CD4-positive, alpha-beta memory T cell (primary cell): ENCODE measurements at regions of chr11 and their contacts with region 1.

Region 1: DNA sequence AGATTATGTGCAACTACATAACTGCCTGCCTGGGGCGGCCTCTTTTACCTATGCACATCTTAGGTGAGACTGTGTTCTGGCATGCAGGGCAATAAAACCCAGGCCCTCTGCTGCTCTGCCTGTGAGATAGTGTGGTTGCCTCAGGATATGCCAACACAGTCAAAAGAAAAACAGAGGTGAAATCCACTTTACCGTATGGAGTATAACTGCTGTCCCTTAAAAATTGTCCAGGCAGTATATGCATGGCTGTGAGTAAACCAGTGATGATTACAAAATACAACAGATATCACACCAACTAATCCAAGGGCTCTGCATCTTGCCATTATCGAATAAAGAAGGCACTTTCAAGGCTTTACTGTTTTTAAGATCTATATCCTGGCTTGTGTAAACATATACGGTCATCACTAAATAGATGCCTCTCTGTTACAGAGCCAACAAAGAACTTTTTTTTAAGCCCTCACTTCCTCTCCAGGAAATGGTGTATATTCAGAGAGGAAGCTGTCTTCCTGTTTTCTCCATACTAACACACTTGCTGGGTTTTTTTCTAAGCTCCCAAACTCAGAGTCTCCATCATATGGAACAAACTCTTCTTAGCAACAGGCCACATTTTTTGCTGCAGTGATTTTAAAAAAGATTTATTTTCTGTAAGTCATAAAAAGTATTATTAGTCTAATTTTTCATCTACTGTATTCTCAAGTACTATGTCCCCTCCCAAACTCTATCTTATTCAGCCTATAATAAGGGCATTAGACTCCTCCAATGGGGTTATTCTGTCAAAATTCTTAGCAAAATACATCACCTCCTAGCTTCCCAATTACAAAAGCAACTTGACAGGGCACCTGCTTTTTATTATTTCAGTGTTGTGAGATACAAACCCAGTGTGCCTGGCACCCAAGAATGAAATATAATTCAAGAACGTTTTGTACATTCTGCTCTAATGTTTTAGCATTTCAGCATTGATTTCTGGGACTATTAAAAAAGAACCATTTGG is 135.2 kb downstream of the MAML2 start:
- DNase-seq: peak in 4 of 5 donors; percentile 52 to 62 (median 56)
- H3K4me3 ChIP-seq: peak overlapping the region in 1 of 2 donors; percentile 16
- H3K4me3 Mint-ChIP-seq: peak overlapping the region; percentile 31 to 89 (median 70)
- H3K27ac ChIP-seq: peak overlapping the region; percentile 39
- H3K27ac Mint-ChIP-seq: peak overlapping the region; percentile 80 to 97 (median 90)
- H3K4me1 ChIP-seq: peaks cover 97% of the 10 kb centered on the region
- H3K4me1 Mint-ChIP-seq: peaks cover 62 to 92% (median 79%) of the 10 kb centered on the region in 4 donors
- H3K27me3 ChIP-seq: no peaks in the 10 kb centered on the region
- H3K27me3 Mint-ChIP-seq: no peaks in the 10 kb centered on the region

Region 2: GRCh38 chr11:96045622-96046456 is 161.9 kb before region 1 on chr11:
- CTCF ChIA-PET with region 1: no interaction called
- POLR2A ChIA-PET with region 1: no interaction called
- intact Hi-C with region 1: no loop called
- DNase-seq: no peak
- H3K4me3 ChIP-seq: no peak overlapping the region
- H3K4me3 Mint-ChIP-seq: no peak overlapping the region
- H3K27ac ChIP-seq: no peak overlapping the region
- H3K27ac Mint-ChIP-seq: peak overlapping the region in 1 of 7 donors; percentile 10
- H3K4me1 ChIP-seq: no peaks in the 10 kb centered on the region
- H3K4me1 Mint-ChIP-seq: peaks cover 17 to 42% (median 20%) of the 10 kb centered on the region in 4 donors
- H3K27me3 ChIP-seq: no peaks in the 10 kb centered on the region
- H3K27me3 Mint-ChIP-seq: no peaks in the 10 kb centered on the region

Region 3: GRCh38 chr11:96091476-96091875 is 116.3 kb before region 1 on chr11:
- CTCF ChIA-PET with region 1: interaction called, 3 read pairs
- POLR2A ChIA-PET with region 1: no interaction called
- intact Hi-C with region 1: loop called (anchors 5 kb)
- DNase-seq: peak; percentile 34 to 54 (median 43)
- H3K4me3 ChIP-seq: no peak overlapping the region
- H3K4me3 Mint-ChIP-seq: peak overlapping the region in 4 of 8 donors; percentile 24 to 75 (median 32)
- H3K27ac ChIP-seq: no peak overlapping the region
- H3K27ac Mint-ChIP-seq: peak overlapping the region in 3 of 7 donors; percentile 23 to 43 (median 40)
- H3K4me1 ChIP-seq: peaks cover 32% of the 10 kb centered on the region
- H3K4me1 Mint-ChIP-seq: peaks cover 32 to 79% (median 61%) of the 10 kb centered on the region in 4 donors
- H3K27me3 ChIP-seq: no peaks in the 10 kb centered on the region
- H3K27me3 Mint-ChIP-seq: no peaks in the 10 kb centered on the region

Region 4: GRCh38 chr11:96180341-96180740 is 27.4 kb before region 1 on chr11:
- CTCF ChIA-PET with region 1: no interaction called
- POLR2A ChIA-PET with region 1: no interaction called
- intact Hi-C with region 1: no loop called
- DNase-seq: no peak
- H3K4me3 ChIP-seq: no peak overlapping the region
- H3K4me3 Mint-ChIP-seq: no peak overlapping the region
- H3K27ac ChIP-seq: no peak overlapping the region
- H3K27ac Mint-ChIP-seq: peak overlapping the region in 4 of 7 donors; percentile 24 to 70 (median 67)
- H3K4me1 ChIP-seq: peaks cover 11% of the 10 kb centered on the region
- H3K4me1 Mint-ChIP-seq: peaks cover 21 to 56% (median 33%) of the 10 kb centered on the region in 4 donors
- H3K27me3 ChIP-seq: no peaks in the 10 kb centered on the region
- H3K27me3 Mint-ChIP-seq: no peaks in the 10 kb centered on the region

Region 5: DNA sequence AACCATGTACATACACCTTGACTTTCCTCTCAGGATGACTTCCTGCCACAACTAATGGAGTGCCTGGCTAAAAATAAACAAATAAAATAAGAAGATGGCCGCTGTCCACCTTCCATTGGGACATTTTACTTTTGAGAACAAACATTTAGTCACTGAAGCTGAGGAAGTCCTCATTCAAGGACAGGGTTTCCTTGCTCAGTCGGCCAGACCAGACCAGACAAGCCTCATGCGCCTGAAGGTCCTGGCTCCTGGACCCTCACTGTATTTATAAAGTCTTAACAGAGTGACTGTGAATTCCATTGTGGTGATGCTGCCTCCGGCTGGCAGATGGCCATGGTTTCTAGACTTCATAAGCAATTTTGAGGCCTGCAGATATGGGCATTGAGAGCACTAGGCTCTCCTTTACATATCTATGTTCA is 20.7 kb after region 1 on chr11:
- CTCF ChIA-PET with region 1: interaction called, 3 read pairs
- POLR2A ChIA-PET with region 1: interaction called, 7 read pairs
- intact Hi-C with region 1: loop called (anchors 1 kb)
- DNase-seq: no peak
- H3K4me3 ChIP-seq: no peak overlapping the region
- H3K4me3 Mint-ChIP-seq: no peak overlapping the region
- H3K27ac ChIP-seq: no peak overlapping the region
- H3K27ac Mint-ChIP-seq: peak overlapping the region in 6 of 7 donors; percentile 30 to 89 (median 48)
- H3K4me1 ChIP-seq: peaks cover 47% of the 10 kb centered on the region
- H3K4me1 Mint-ChIP-seq: peaks cover 51 to 78% (median 66%) of the 10 kb centered on the region in 4 donors
- H3K27me3 ChIP-seq: no peaks in the 10 kb centered on the region
- H3K27me3 Mint-ChIP-seq: no peaks in the 10 kb centered on the region

Region 6: DNA sequence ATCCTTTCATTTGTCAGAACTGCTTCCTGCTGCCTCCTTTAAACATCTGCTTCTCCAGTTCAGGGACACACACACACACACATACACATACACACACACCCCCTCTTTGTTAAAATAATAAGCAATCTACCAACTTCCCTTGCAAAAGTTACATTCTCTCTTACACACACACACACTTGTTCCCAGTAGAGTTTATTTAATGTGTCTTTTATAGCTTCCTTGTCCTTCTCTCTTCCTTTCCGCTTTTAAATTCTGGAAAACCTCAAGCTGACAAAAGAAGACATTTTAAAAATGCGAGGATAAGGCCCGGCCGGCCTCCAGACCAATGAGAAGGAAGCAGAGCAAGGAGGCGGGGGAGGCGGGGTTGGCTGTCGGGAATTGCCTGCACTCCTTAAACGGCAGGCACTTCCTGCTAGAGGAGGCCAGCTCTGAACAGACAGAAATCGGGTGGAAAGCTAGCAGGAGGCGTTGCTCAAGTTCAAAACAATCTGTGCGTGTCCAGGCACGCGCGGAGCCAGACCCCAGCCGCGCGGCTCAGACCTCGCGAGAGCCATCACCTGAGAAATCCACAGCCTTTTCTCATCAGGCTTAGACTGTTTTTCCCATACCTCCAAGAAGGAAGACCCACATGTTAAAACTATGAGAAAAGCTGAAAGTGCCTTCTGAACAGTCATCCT is 35.4 kb after region 1 on chr11:
- CTCF ChIA-PET with region 1: interaction called, 4 read pairs
- POLR2A ChIA-PET with region 1: interaction called, 10 read pairs
- intact Hi-C with region 1: no loop called
- DNase-seq: peak; percentile 65 to 89 (median 68)
- H3K4me3 ChIP-seq: peak overlapping the region; percentile 33 to 57
- H3K4me3 Mint-ChIP-seq: peak overlapping the region; percentile 85 to 93 (median 90)
- H3K27ac ChIP-seq: peak overlapping the region; percentile 63
- H3K27ac Mint-ChIP-seq: peak overlapping the region; percentile 88 to 97 (median 93)
- H3K4me1 ChIP-seq: peaks cover 47% of the 10 kb centered on the region
- H3K4me1 Mint-ChIP-seq: peaks cover 28 to 57% (median 48%) of the 10 kb centered on the region in 4 donors
- H3K27me3 ChIP-seq: no peaks in the 10 kb centered on the region
- H3K27me3 Mint-ChIP-seq: no peaks in the 10 kb centered on the region